Natural killer cell (primary cell): ENCODE measurements at regions of chr4 and their contacts with region 1.

Region 1: GRCh38 chr4:99088481-99089365 is at the start of gene ADH5:
- DNase-seq: peak; percentile 78 to 94
- ATAC-seq: peak; percentile 92 to 98 (median 93)
- H3K4me3 ChIP-seq: peak within 1 kb of the TSS; percentile 74
- H3K4me3 Mint-ChIP-seq: peak within 1 kb of the TSS; percentile 98
- H3K27ac ChIP-seq: peak within 1 kb of the TSS; percentile 89
- H3K27ac Mint-ChIP-seq: peak within 1 kb of the TSS; percentile 96 to 99
- H3K4me1 ChIP-seq: peaks cover 19% of the 10 kb centered on the region
- H3K4me1 Mint-ChIP-seq: peaks cover 59 to 66% of the 10 kb centered on the region in 2 donors
- H3K27me3 ChIP-seq: no peaks in the 10 kb centered on the region
- H3K27me3 Mint-ChIP-seq: no peaks in the 10 kb centered on the region
- CTCF ChIP-seq: no peak
- total RNA-seq, gene ADH5: 54.3 to 80.4 (median 62.5) TPM

Region 2: DNA sequence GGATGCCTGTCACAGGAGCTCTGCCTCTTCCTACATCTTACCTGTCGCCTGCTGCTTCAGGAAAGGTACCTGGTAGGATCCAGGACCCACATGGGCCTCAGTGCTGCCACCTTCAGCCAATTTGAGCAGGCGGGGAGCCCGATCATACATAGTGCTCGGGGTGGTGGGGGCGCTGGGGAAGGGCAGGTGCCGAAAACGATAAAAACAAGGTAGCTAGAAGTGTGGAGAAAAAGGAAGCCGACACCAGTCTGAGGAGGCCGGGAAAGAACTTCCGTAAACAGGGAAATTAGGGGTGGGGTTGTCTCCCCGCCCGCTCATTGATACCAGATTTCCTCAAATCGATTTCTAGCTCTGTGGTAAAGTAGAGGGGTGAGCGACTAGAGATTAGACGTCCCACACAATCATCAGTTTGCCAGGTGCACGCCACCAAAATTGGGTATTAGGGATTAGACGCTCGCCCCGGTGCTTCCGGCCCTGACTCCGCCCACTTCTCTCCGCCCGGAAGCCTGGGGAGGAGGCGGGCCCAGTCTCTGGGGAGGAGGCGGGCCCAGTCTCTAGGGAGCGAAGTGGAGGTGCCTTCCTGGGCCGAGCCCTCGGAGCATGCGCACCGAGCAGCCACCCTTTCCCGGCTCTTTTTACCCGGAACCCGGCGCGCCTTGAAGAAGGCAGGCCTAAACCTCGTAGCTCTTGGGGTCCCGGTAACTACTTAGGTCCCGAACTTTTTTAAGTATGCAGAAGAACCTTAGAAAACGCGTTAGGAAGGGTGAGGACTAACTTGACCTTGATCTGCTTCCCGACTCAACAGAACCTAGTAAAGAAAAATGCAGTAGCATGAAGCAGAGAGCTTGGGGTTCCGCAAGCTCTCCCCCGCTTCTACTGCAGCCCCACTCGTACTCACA is 945.5 kb before region 1 on chr4 and contains the start of gene STPG2:
- intact Hi-C with region 1: loop called (anchors 1 kb)
- DNase-seq: peak; percentile 87 to 97
- ATAC-seq: peak; percentile 100
- H3K4me3 ChIP-seq: peak within 1 kb of the TSS; percentile 87
- H3K4me3 Mint-ChIP-seq: peak within 1 kb of the TSS; percentile 98
- H3K27ac ChIP-seq: peak within 1 kb of the TSS; percentile 95
- H3K27ac Mint-ChIP-seq: peak within 1 kb of the TSS; percentile 94 to 95
- H3K4me1 ChIP-seq: peaks cover 13% of the 10 kb centered on the region
- H3K4me1 Mint-ChIP-seq: peaks cover 15 to 19% of the 10 kb centered on the region in 2 donors
- H3K27me3 ChIP-seq: no peaks in the 10 kb centered on the region
- H3K27me3 Mint-ChIP-seq: peaks cover 12 to 22% of the 10 kb centered on the region in 2 donors
- CTCF ChIP-seq: peak; percentile 54
- total RNA-seq, gene STPG2: 0.23 TPM in 1 of 3 donors, not detected in the others

Region 3: DNA sequence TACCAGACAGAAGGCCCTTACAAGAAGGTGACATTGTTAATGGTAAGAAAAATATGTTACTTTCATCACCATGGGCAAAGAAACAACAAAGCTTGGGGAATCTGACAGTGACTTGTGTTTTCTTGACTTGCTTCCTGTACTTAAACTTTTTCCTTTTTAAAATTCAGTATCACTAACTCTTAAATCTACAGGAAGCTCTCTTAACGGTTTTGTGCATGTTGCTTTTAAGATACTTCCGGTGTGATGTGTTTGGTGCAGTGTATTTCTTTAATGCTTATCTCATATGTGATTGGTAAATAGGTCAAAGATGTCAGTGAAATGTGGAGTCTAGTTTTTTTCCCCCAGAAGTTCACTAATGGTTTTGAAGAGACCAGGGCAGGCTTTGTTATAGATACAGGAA is 45.4 kb before region 1 on chr4:
- intact Hi-C with region 1: loop called (anchors 1 kb)
- DNase-seq: peak in 1 of 2 donors; percentile 68
- ATAC-seq: peak; percentile 92 to 96 (median 95)
- H3K4me3 ChIP-seq: no peak overlapping the region
- H3K4me3 Mint-ChIP-seq: peak overlapping the region; percentile 63
- H3K27ac ChIP-seq: peak overlapping the region; percentile 95
- H3K27ac Mint-ChIP-seq: peak overlapping the region; percentile 91 to 96
- H3K4me1 ChIP-seq: peaks cover 7% of the 10 kb centered on the region
- H3K4me1 Mint-ChIP-seq: peaks cover 12% of the 10 kb centered on the region in 2 donors
- H3K27me3 ChIP-seq: no peaks in the 10 kb centered on the region
- H3K27me3 Mint-ChIP-seq: no peaks in the 10 kb centered on the region
- CTCF ChIP-seq: no peak

Region 4: GRCh38 chr4:99808260-99808857 is 719.6 kb after region 1 on chr4:
- intact Hi-C with region 1: no loop called
- DNase-seq: peak in 1 of 2 donors; percentile 82
- ATAC-seq: peak; percentile 66 to 88 (median 78)
- H3K4me3 ChIP-seq: no peak overlapping the region
- H3K4me3 Mint-ChIP-seq: no peak overlapping the region
- H3K27ac ChIP-seq: no peak overlapping the region
- H3K27ac Mint-ChIP-seq: no peak overlapping the region
- H3K4me1 ChIP-seq: no peaks in the 10 kb centered on the region
- H3K4me1 Mint-ChIP-seq: no peaks in the 10 kb centered on the region
- H3K27me3 ChIP-seq: peaks cover 2% of the 10 kb centered on the region
- H3K27me3 Mint-ChIP-seq: peaks cover 7 to 43% of the 10 kb centered on the region in 2 donors
- CTCF ChIP-seq: peak; percentile 66

Region 5: GRCh38 chr4:99949034-99949998 is 860.6 kb after region 1 on chr4:
- intact Hi-C with region 1: loop called (anchors 1 kb)
- DNase-seq: peak; percentile 72 to 95
- ATAC-seq: peak; percentile 26 to 59 (median 35)
- H3K4me3 ChIP-seq: peak overlapping the region; percentile 100
- H3K4me3 Mint-ChIP-seq: no peak overlapping the region
- H3K27ac ChIP-seq: peak overlapping the region; percentile 91
- H3K27ac Mint-ChIP-seq: no peak overlapping the region
- H3K4me1 ChIP-seq: peaks cover 20% of the 10 kb centered on the region
- H3K4me1 Mint-ChIP-seq: peaks cover 25 to 32% of the 10 kb centered on the region in 2 donors
- H3K27me3 ChIP-seq: no peaks in the 10 kb centered on the region
- H3K27me3 Mint-ChIP-seq: no peaks in the 10 kb centered on the region
- CTCF ChIP-seq: peak; percentile 81